H1 (cell line): ENCODE measurements at regions of chr7 and their contacts with region 1.

Region 1: DNA sequence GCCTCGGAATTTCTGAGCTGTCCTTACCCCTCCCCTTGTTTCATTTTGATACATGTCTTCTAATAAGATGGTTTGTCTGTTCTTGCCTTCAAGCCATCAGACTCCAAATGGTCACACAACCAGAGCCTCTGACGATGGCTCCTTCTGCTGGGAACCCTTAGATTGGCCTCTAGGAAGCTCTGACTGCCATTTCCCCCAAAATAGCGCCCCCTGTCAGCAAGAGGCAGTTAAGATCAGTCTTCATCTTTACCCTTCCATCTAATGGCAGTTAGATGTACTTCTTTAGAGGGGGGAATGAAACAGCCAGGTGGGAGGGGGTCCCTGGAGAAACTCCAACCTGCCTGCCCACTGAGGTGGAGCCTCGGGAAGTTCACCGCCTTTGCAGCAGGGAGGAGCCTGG is 85.8 kb upstream of the GPR22 start:
- DNase-seq: no peak
- H3K4me3 ChIP-seq: no peak overlapping the region
- H3K27ac ChIP-seq: no peak overlapping the region
- H3K4me1 ChIP-seq: peaks cover 0 to 16% (median 8%) of the 10 kb centered on the region in 4 experiments; a peak in 6 of 7 replicates
- H3K27me3 ChIP-seq: no peaks in the 10 kb centered on the region
- CTCF ChIP-seq: peak in 2 of 3 experiments; percentile 29 to 40; a peak in 3 of 4 replicates
- EP300 ChIP-seq: no peak
- POLR2A ChIP-seq: no peak
- RAD21 ChIP-seq: peak; percentile 21 to 24; a peak in 3 of 4 replicates

Region 2: GRCh38 chr7:107372298-107372697 is 11.7 kb before region 1 on chr7:
- CTCF ChIA-PET with region 1: interaction called, 12 read pairs
- POLR2A ChIA-PET with region 1: no interaction called
- DNase-seq: no peak
- H3K4me3 ChIP-seq: no peak overlapping the region
- H3K27ac ChIP-seq: no peak overlapping the region
- H3K4me1 ChIP-seq: no peaks in the 10 kb centered on the region
- H3K27me3 ChIP-seq: no peaks in the 10 kb centered on the region
- CTCF ChIP-seq: no peak
- EP300 ChIP-seq: no peak
- POLR2A ChIP-seq: no peak
- RAD21 ChIP-seq: no peak